Right ventricle myocardium inferior (tissue), 1 donor: ENCODE measurements at regions of chr3 and their contacts with region 1.

Region 1: GRCh38 chr3:177827511-177828207 is 630.4 kb upstream of the TBL1XR1 start:
- DNase-seq: no peak
- ATAC-seq: no peak

Region 2: DNA sequence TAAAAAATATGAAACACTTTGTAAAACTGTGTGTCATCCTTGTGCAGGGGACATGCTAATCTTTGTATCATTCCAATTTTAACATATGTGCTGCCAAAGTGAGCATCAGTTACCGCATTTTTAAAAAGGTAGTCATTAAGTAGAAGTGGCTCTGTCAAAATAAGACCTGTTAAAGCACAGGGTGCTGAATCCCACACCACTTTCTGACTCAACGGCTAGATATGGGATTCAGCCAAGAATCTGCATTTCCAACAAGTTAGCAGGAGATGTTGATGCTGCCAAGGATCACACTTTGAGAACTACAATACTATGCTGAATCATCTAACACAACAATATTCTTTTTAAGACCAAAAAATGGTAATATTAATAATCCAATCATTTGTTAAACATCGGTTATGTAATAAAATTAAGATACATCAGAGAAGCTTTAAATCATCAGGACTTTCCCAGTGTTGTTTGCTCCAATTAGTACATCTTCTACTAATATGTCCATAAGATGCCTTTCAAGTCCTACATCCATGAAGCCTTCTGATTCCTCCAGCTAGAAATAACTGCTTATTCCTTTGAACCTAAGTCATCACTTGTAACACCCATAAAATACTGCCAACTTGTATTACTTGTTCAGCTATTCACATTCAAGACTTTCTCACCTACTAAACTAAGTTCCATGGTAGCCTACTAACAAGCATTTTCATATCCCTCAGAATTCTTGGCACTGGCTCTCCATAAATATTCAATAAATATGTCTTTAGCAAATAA is 701.5 kb before region 1 on chr3:
- intact Hi-C with region 1: no loop called
- DNase-seq: no peak
- ATAC-seq: peak; percentile 81

Region 3: DNA sequence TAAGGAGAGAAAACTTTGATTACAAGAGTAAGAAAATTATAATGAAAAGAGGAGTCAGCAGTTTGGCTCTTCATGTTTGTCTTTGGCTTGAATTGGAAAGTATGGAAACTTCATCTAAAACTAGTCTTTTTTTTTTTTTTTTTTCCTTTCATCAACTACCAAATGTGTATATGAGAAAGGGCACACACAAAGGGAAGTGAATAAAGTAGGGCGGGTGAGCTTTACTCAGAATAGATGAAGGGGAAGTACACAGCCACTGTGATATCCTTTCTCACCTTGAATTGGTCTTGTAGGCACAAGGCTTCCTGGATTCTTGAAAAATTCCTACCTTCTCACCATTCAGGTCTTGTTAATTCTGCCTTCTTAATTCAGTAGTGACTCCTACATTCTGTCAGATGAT is 56.3 kb after region 1 on chr3:
- intact Hi-C with region 1: loop called (anchors 5 kb)
- DNase-seq: no peak
- ATAC-seq: no peak

Region 4: DNA sequence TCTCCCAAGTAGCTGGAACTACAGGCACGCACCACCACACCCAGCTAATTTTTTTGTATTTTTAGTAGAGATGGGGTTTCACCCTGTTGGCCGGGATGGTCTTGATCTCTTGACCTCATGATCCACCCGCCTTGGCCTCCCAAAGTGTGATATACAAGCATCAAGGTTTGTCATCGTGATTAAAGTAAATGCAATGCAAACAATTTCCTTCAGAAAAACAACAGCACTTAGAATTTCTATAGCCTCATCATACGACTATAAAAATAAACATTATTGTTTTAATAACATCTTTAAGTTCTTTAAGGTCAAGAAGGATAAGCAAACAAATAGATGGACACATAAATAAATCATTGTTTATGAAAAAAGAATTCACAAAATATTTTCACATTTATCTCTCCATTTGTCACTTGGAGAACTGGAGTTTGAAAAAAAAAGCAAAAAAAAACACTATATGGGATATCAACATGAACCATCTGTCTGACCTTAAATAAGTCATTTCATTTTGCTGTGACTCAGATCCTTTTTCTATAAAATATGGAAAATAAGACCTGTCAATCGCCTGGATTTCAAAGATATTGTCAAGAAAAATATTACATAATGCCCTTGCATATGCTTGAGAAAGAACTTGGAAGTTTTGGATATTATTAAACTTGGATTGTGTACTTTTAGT is 66.5 kb after region 1 on chr3:
- intact Hi-C with region 1: no loop called
- DNase-seq: no peak
- ATAC-seq: no peak

Region 5: DNA sequence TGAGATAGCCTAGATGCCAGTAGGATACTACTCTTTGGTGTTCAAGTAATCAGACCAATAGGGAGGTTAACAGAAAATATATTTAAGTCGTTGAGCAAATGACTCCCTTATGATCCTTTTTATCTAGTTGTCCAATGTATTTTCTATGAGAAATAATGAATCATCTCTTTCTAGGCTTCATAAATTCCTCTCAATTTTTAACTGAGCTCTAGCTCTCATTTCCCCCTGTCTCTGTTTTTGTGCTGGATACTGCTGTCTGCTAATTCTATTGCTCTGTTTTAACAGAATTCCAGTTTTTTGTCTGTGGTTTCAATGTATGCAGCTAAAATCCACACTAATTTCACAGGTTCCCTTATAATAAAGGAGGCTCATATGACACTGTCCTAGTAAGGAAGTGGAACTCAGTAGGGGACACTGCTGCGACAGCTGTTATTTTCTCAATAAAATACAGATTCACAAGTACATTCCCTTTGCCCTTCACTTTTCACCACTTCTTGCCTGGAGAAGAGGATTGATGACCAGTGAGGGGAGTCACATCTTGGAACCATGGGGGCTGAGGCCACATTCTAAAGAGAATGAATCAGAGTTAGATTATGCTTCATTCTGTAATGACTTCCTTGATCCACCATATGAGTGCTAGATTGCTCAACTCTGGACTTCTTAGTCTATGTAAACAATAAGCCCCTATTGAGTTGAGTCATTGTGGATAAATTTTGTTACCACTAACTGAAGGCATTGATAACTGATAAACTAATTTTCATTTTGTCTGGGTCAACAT is 149.9 kb after region 1 on chr3:
- intact Hi-C with region 1: no loop called
- DNase-seq: no peak
- ATAC-seq: no peak

Region 6: DNA sequence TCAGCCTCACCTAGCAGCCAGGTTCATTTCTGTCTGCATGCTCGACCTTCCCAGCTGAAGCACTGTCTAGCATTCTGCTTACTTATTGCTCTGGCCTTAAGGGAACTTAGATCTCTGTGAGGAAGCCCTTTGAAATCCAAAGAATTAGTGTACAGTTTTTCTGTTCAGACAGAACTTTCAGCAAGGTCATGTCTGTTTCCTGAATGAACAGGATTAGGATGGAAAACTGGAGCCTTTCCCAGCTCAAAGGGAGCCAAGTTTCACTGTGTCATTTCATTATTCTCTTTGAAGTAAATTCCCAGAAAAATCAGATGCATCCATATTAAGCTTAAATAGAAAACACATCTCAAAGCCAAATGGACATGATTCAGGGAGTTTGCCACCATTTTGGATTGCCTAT is 251.3 kb after region 1 on chr3:
- intact Hi-C with region 1: loop called (anchors 10 kb)
- DNase-seq: no peak
- ATAC-seq: peak; percentile 63

Region 7: GRCh38 chr3:178170698-178171535 is 343.3 kb after region 1 on chr3:
- intact Hi-C with region 1: loop called (anchors 5 kb)
- DNase-seq: no peak
- ATAC-seq: peak; percentile 92